ENCODE measurements at regions of chr19 and their contacts with region 1.

Region 1: DNA sequence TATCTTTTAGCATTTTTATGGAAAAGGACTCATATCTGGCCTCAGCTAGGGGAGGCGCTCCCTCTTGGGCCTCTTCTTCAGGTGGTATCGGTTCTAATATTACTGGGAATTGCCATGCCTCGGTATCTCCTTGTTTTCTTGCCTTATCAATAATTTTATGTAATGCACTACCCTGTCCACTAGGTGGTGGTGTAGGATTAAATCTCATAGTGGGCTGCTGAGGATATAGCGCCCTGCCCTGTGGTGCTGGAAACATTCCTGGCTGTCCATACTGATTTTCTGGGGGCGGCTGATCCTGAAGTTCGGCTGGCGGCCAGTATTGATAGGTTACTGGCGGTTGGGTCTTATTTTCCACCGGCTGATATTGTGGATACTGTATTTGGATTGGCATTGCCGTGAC is 35.8 kb downstream of the ZNF420 start:
- DNase-seq: peak; percentile 27 to 37 (median 32)
- ATAC-seq: no peak
- H3K4me3 ChIP-seq: no peak overlapping the region
- H3K27ac ChIP-seq: no peak overlapping the region
- H3K4me1 ChIP-seq: no peaks in the 10 kb centered on the region
- H3K27me3 ChIP-seq: no peaks in the 10 kb centered on the region
- CTCF ChIP-seq: peak; percentile 47 to 51 (median 49); a peak in 5 of 6 replicates
- EP300 ChIP-seq: no peak
- POLR2A ChIP-seq: no peak
- RAD21 ChIP-seq: peak in 1 of 2 experiments; percentile 52; a peak in 2 of 4 replicates

Region 2: DNA sequence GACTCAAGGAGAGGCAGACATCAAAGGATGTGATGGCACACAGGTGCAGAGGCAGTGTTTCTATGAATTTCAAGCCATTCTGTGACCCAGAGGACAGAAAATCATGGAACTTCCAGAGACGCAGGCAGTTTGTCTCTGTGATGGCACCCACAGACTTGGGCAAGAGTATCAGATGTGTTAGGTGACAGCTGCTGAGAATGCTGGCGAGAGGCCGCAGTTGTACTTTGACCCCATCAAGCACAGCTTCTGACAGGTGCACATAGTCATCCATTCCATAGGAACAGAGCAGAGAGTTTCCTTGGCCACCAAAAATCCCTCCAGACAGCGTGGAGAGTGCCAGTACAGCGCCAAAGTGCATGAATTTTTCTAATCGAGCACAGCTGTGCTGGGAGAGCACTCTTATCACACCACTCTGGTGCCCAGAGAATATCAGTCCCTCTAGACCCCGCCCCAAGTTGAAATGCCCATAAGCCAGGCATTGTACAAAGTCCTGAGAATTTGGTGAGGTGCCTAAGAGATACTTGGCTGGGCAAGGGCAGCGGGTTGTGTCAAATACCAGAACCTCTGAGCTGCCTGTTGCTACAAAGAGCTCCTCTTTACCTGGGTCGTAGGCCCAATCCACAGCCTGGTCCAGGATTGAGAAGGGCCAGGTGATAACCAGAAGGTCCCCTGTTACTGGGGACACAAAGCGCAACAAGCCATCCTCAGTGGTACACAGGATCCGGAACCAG is 780.0 kb after region 1 on chr19:
- CTCF ChIA-PET with region 1: no interaction called
- POLR2A ChIA-PET with region 1: no interaction called
- in situ Hi-C with region 1: no loop called
- intact Hi-C with region 1: loop called (anchors 10 kb)
- DNase-seq: no peak
- ATAC-seq: no peak
- H3K4me3 ChIP-seq: no peak overlapping the region
- H3K27ac ChIP-seq: no peak overlapping the region
- H3K4me1 ChIP-seq: no peaks in the 10 kb centered on the region
- H3K27me3 ChIP-seq: peaks cover 19 to 37% of the 10 kb centered on the region in 2 experiments; a peak in 4 of 5 replicates
- CTCF ChIP-seq: no peak
- EP300 ChIP-seq: no peak
- POLR2A ChIP-seq: no peak
- RAD21 ChIP-seq: no peak

Measured in K562 (cell line).